Activated naive CD4-positive, alpha-beta T cell treated with anti-CD3 and anti-CD28 coated beads for 36 hours (primary cell): ENCODE measurements at regions of chr1 and their contacts with region 1.

Region 1: DNA sequence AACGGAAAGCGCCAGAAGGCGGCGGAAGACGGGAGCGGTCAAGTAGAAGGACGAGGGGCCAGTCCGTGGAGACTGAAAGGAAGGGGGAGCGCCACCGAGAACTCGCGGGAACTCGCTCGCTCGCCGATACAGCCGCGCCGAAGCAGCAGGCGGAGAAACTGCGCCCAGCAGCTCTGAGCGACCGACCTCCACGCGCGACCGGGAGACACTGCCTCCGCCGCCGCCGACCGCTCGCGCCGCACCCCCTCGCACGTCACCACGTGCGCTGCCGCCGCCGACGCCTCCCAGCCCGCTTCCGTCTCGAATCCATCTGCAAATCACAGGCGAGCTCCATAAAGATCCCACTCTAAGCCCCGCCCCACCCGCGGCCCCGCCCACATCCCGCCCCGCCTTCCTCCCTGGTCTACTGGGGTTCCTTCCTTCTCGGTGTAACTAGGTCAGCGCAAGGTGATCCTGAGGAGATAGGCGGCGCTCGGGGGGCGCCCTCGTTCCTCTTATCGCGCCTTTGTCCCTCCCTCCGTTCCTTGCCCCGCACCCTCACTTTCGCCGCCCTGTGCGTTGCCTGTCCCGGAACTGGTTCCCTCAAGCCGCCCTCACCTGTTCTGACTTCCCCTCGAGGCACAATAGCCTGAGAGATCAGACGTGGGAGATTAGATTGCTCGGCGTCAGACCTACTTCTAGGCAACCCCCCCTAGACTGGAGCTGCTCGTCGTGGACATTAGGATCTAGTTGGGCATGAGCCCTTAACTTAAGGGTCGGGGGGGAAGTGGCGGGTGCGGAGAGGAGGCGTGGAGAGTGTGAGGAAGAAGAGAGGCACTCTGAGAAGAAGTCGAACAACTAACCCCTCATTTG is at the start of gene IVNS1ABP:
- DNase-seq: peak; percentile 95
- H3K4me3 Mint-ChIP-seq: peak within 1 kb of the TSS; percentile 92
- H3K27ac Mint-ChIP-seq: peak within 1 kb of the TSS; percentile 94
- H3K4me1 Mint-ChIP-seq: peaks cover 40% of the 10 kb centered on the region
- H3K27me3 Mint-ChIP-seq: no peaks in the 10 kb centered on the region
- total RNA-seq, gene IVNS1ABP: 97.3 to 100 TPM

Region 2: DNA sequence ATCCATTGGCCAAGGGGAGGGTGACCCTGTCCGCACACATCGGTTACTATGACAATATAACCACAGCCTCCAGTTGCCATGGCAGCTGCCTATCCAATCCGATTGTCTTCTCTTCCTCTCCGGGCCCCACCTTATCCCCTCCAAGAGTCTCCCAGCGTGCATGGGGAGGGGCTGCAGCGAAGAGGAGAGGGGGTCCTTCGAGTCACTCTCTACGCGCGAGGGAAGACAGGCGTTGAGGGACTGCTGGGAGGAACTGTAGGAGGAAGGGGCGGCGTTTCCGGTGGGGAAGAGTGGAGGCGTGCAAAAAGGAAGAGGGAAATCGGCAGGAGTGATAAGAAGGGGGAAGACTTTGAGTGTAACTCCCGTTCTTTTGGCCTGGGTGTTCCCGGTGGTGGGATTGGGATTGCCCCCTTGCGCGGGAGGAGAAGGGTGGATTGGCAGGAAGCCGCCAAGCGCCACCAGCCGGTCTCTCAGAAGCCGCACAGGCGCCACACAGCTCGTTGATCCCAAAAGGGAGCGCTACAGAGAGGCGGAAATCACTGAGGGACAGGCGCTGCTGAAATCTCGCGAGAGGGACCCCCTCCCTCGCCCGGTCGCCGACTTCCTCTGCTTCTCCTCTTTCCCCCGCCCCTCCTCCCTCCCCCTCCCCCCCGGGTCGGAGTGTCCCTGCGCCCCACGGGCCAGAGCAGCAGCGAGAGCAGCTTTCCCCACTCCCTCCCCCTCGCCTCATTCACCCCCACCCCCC is 1845.3 kb before region 1 on chr1:
- CTCF ChIA-PET with region 1: no interaction called
- intact Hi-C with region 1: loop called (anchors 2 kb)
- DNase-seq: peak; percentile 98
- H3K4me3 Mint-ChIP-seq: peak overlapping the region; percentile 81
- H3K27ac Mint-ChIP-seq: peak overlapping the region; percentile 99
- H3K4me1 Mint-ChIP-seq: peaks cover 24% of the 10 kb centered on the region
- H3K27me3 Mint-ChIP-seq: no peaks in the 10 kb centered on the region

Region 3: GRCh38 chr1:184881941-184882913 is 435.0 kb before region 1 on chr1:
- CTCF ChIA-PET with region 1: no interaction called
- intact Hi-C with region 1: loop called (anchors 5 kb)
- DNase-seq: peak; percentile 31
- H3K4me3 Mint-ChIP-seq: no peak overlapping the region
- H3K27ac Mint-ChIP-seq: peak overlapping the region; percentile 79
- H3K4me1 Mint-ChIP-seq: peaks cover 25% of the 10 kb centered on the region
- H3K27me3 Mint-ChIP-seq: peaks cover 25% of the 10 kb centered on the region

Region 4: GRCh38 chr1:185177360-185177759 is 139.9 kb before region 1 on chr1:
- CTCF ChIA-PET with region 1: no interaction called
- intact Hi-C with region 1: no loop called
- DNase-seq: no peak
- H3K4me3 Mint-ChIP-seq: no peak overlapping the region
- H3K27ac Mint-ChIP-seq: no peak overlapping the region
- H3K4me1 Mint-ChIP-seq: peaks cover 4% of the 10 kb centered on the region
- H3K27me3 Mint-ChIP-seq: no peaks in the 10 kb centered on the region

Region 5: GRCh38 chr1:185238447-185238846 is 78.8 kb before region 1 on chr1:
- CTCF ChIA-PET with region 1: interaction called, 5 read pairs
- intact Hi-C with region 1: loop called (anchors 1 kb)
- DNase-seq: no peak
- H3K4me3 Mint-ChIP-seq: no peak overlapping the region
- H3K27ac Mint-ChIP-seq: no peak overlapping the region
- H3K4me1 Mint-ChIP-seq: peaks cover 27% of the 10 kb centered on the region
- H3K27me3 Mint-ChIP-seq: no peaks in the 10 kb centered on the region

Region 6: GRCh38 chr1:185559684-185560331 is 242.5 kb after region 1 on chr1:
- CTCF ChIA-PET with region 1: no interaction called
- intact Hi-C with region 1: loop called (anchors 1 kb)
- DNase-seq: peak; percentile 58
- H3K4me3 Mint-ChIP-seq: no peak overlapping the region
- H3K27ac Mint-ChIP-seq: no peak overlapping the region
- H3K4me1 Mint-ChIP-seq: peaks cover 43% of the 10 kb centered on the region
- H3K27me3 Mint-ChIP-seq: no peaks in the 10 kb centered on the region

Region 7: DNA sequence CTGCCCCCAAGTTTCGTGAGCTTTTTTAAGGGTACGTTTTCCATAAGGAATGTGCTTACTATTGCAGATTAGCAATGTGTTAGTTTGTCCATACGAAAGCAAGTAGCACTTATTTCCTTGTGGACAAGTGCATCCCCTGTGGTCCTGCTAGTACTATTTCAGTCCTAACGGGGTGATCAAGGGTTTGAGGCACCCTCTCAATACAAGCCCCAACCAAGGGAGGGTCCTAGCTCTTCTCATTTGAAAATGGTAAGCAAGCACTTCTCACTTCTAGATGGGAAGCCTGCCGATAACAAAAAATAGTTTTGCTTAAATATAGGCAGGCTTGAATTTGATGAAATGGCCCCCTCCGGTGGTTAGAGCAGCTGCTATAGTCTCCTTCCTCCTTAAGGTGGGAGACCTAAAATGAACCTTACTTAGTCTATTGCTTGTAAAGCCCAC is 352.9 kb after region 1 on chr1:
- CTCF ChIA-PET with region 1: interaction called, 8 read pairs
- intact Hi-C with region 1: loop called (anchors 1 kb)
- DNase-seq: peak; percentile 69
- H3K4me3 Mint-ChIP-seq: no peak overlapping the region
- H3K27ac Mint-ChIP-seq: no peak overlapping the region
- H3K4me1 Mint-ChIP-seq: peaks cover 14% of the 10 kb centered on the region
- H3K27me3 Mint-ChIP-seq: no peaks in the 10 kb centered on the region

Region 8: DNA sequence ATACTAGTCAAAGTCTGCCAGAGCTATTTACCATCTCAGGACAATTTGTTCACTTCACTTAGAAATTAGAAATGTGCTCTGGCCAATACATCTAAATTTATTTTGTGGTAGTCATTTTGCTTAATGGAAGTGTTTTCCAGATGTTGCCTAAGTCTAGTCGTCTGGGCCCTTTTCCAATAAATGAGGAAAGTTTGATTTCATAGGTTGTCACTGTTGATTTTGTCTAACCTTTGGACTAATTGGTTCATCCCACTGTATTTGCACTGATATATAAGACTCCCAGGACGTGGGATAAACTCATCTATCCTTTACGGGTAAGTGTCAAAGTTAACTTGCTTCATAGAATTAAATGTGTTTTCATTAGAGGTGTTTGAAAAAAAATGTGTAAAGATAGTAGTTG is 978.7 kb after region 1 on chr1:
- CTCF ChIA-PET with region 1: no interaction called
- intact Hi-C with region 1: loop called (anchors 2 kb)
- DNase-seq: no peak
- H3K4me3 Mint-ChIP-seq: peak within 1 kb of the TSS; percentile 42
- H3K27ac Mint-ChIP-seq: peak within 1 kb of the TSS; percentile 99
- H3K4me1 Mint-ChIP-seq: peaks cover 69% of the 10 kb centered on the region
- H3K27me3 Mint-ChIP-seq: no peaks in the 10 kb centered on the region